Motor neuron (in vitro differentiated cells): ENCODE measurements at regions of chr12 and their contacts with region 1.

Region 1: DNA sequence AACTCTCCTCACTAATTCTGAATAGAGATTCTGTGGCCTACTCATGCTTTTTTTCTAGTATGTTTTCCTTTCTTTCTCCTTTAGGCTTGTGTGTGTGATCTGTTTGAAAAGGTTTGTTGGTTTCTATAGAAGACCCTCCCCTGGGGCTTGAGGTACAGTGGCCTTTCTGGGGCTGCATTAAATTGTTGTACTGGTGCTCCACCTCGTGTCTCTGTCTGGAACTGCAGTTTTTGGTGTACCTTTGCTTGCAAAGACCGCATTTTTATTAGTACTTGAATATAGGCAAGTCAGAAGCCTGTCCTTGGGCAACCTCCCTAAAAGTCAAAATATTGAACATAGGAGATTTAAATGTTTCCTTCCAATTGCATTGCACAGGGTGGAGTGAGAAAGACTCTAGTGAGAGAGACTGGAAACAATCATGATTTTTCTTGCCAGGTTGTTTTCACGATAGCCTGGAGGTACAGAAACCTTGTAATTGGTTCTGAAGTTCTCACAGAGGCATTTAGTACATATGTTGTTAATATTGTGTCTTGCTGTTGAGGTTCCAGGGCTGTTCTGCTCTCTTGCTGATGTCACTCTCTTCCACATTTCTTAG is 39.0 kb downstream of the SLCO1B1 start:
- ATAC-seq: peak in 3 of 8 experiments; percentile 36 to 63 (median 41)
- H3K4me3 ChIP-seq: no peak overlapping the region
- H3K27ac ChIP-seq: no peak overlapping the region
- H3K4me1 ChIP-seq: no peaks in the 10 kb centered on the region

Region 2: GRCh38 chr12:20646239-20646827 is 523.6 kb before region 1 on chr12:
- in situ Hi-C with region 1: loop called in 1 of 9 experiments (anchors 25 kb)
- ATAC-seq: peak; percentile 52 to 73 (median 58)
- H3K4me3 ChIP-seq: no peak overlapping the region
- H3K27ac ChIP-seq: no peak overlapping the region
- H3K4me1 ChIP-seq: no peaks in the 10 kb centered on the region

Region 3: DNA sequence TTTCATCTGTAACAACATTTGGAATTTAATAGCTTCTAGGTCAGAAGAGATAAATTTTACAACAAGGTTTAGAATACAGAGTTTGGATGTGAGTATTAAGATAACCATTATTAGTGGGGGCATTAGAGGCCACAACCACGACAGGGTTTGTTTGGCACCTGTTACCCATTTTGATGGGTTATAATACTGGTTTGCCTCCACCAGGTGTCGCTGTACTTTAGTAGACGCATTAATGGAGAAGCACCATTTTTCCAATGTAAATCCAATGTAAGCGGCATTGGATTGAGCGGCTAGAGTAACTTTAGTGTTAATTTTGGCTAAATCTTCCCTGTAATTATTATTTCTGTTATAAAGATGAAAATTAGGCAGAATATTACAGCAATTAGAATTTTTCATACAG is 223.2 kb before region 1 on chr12:
- in situ Hi-C with region 1: loop called in 2 of 9 experiments (anchors 25 kb)
- ATAC-seq: no peak
- H3K4me3 ChIP-seq: no peak overlapping the region
- H3K27ac ChIP-seq: no peak overlapping the region
- H3K4me1 ChIP-seq: no peaks in the 10 kb centered on the region

Region 4: GRCh38 chr12:21073822-21074460 is 96.0 kb before region 1 on chr12:
- in situ Hi-C with region 1: no loop called
- ATAC-seq: no peak
- H3K4me3 ChIP-seq: no peak overlapping the region
- H3K27ac ChIP-seq: no peak overlapping the region
- H3K4me1 ChIP-seq: no peaks in the 10 kb centered on the region

Region 5: DNA sequence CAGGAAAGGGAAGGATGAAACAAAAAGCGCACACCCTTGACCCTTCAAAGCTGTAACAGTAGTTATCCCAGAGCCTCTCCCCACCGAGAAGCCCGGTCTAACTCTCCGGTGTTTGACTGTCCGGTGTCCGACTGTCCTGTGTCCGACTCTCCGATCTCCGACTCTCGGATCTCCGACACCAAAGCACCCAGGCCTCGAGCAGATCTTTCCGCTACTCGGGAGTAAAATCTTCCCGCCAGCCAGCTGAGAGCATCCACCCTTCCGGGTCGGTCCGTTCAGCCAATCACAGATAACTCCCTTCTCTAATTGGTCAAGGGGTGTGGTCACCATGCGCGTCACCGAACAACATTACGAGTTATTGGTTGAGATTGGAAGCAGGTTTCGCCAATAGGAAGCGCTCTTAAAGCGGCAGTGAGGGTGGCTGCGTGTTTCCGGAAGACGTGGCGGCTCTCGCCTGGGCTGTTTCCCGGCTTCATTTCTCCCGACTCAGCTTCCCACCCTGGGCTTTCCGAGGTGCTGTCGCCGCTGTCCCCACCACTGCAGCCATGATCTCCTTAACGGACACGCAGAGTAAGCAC is 331.5 kb after region 1 on chr12 and contains the starts of genes GOLT1B and RECQL:
- in situ Hi-C with region 1: no loop called
- ATAC-seq: peak; percentile 93 to 96 (median 95)
- H3K4me3 ChIP-seq: peak within 1 kb of the TSS; percentile 84 to 88 (median 86)
- H3K27ac ChIP-seq: peak within 1 kb of the TSS; percentile 97 to 99
- H3K4me1 ChIP-seq: peaks cover 14 to 29% of the 10 kb centered on the region in 2 donors
- total RNA-seq, gene GOLT1B: 26.1 to 89.6 (median 45.6) TPM
- total RNA-seq, gene RECQL: 16.0 to 68.4 (median 26.0) TPM

Region 6: DNA sequence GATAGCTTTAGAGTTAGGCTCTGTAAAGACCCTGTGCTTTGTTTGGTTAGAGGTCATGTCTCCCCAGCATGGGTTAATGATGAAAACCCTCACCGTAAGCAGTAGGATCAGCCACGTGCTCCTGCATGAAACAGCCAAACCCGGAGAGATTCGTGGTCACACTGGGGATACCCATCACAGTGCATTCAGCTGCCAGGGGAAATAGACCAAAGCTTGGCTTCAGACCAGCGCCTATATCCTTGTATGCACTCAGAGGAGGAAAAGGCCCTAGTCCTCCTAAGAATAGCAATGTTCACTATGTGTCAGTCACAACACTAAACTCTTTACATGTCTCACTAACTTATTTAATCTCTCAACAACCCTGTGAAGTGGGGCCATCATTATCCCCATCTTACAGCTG is 372.4 kb after region 1 on chr12:
- in situ Hi-C with region 1: no loop called
- ATAC-seq: no peak
- H3K4me3 ChIP-seq: no peak overlapping the region
- H3K27ac ChIP-seq: no peak overlapping the region
- H3K4me1 ChIP-seq: no peaks in the 10 kb centered on the region